Activated CD8-positive, alpha-beta memory T cell treated with anti-CD3 and anti-CD28 coated beads, Interleukin-2, amount 10 ng/mL, durations not matched to agents 7 days and 5 days (primary cell): ENCODE measurements at regions of chr3 and their contacts with region 1.

Region 1: DNA sequence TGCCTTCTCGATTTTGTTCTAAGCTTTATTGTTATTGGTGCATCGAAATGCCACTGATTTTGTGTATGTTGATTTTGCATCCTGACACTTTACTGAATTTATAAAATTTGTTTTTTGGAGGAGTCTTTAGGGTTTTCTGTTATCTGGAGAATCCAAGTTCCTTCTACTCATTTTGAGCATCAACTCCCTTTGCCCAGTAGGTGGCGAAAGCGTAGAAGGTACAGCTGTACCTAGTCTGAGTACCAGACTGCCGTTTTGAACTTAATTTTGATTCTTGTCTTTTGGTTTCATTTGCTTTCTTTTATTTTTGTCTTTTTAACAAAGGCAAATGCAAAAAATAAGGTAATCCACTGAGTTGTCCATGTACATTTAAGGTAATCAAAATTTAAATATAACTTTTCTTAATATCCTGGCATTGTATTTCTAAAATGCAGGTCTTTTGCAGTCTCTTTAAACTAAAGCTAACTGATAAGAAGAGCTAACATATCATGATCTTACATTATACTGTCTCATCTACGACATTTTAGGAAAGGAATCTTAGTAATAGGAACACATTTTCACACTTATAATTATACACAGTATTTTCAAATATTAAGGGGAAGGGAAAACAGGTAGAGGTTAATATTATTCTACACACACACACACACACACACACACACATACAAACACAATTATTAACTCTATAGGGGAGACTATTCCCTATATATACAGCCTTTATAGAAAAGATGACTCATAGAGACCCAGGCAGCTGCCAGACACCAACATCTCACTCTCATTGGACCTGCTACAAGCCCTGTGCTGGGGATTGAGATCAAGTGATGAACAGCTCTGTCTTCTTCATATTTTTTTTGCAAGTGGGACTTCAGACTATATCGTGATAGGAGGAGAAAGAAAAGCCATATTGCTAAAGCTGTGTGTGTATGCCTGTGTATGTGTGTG is 71.7 kb downstream of the SYNPR start:
- DNase-seq: peak; percentile 54
- ATAC-seq: no peak
- H3K4me3 Mint-ChIP-seq: no peak overlapping the region
- H3K27ac Mint-ChIP-seq: no peak overlapping the region
- H3K4me1 Mint-ChIP-seq: no peaks in the 10 kb centered on the region
- H3K27me3 Mint-ChIP-seq: peaks cover 14% of the 10 kb centered on the region

Region 2: DNA sequence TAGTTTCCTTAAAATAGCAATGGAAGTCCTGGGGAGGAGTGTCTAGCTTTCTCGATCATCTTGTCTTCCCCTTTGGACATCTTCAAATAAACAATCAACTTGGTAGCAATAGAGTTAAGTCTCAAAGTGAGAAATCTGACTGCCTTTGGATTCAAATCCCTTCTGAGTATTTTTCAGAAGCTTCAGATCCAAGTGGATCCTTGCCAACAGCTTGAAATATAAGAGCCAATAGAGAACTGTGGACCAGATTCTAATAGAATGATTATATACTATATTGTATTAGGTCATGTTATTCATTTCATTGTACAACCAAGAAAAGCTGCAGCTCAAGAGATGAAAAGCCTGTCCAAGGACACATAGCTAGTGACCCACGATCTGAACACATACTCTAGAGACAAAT is 11.5 kb before region 1 on chr3:
- CTCF ChIA-PET with region 1: no interaction called
- DNase-seq: no peak
- ATAC-seq: no peak
- H3K4me3 Mint-ChIP-seq: no peak overlapping the region
- H3K27ac Mint-ChIP-seq: no peak overlapping the region
- H3K4me1 Mint-ChIP-seq: no peaks in the 10 kb centered on the region
- H3K27me3 Mint-ChIP-seq: peaks cover 3% of the 10 kb centered on the region

Region 3: GRCh38 chr3:63370094-63370493 is 20.2 kb after region 1 on chr3:
- CTCF ChIA-PET with region 1: no interaction called
- DNase-seq: no peak
- ATAC-seq: no peak
- H3K4me3 Mint-ChIP-seq: no peak overlapping the region
- H3K27ac Mint-ChIP-seq: no peak overlapping the region
- H3K4me1 Mint-ChIP-seq: no peaks in the 10 kb centered on the region
- H3K27me3 Mint-ChIP-seq: peaks cover 4% of the 10 kb centered on the region

Region 4: DNA sequence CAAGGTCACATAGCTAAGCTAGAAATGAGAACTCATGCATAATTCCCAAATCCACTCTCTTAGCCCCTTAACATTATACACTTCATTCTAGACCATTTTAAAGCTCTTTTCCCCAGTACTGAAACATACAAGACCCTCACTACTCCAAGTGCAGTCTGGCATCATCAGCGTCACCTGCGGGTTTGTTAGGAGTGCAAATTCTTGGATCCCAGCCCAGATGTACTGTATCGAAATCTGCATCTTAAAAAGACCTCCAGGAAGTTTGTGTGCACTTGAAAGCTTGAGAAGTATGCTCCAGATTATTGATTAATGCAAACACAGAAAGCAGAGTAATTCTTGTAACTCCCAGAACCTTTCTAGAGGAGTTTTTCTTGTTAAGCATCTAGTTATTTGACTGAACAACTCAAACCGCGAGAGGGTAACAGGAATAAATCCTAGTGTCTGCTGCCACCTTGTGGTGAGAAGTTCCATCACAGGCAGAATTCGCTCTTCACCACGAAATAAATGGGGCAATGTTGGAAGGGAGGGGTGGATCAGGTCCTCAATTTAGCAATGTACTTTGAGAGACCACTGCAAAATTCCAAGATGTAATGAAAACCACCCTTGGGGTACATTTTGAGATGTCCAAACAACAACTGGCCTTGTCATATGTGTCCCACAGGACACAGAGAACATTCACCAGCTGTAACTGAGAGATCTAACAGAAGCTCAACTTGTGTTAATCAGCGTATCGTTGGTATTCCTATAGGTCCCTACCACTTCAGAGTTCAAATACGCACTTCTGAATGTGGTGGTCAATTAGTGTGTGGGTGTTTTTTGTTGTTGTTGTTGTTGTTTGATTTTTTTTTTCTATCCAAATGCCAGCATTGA is 468.7 kb after region 1 on chr3:
- CTCF ChIA-PET with region 1: interaction called, 36 read pairs
- DNase-seq: peak; percentile 70
- ATAC-seq: peak; percentile 60
- H3K4me3 Mint-ChIP-seq: no peak overlapping the region
- H3K27ac Mint-ChIP-seq: no peak overlapping the region
- H3K4me1 Mint-ChIP-seq: no peaks in the 10 kb centered on the region
- H3K27me3 Mint-ChIP-seq: no peaks in the 10 kb centered on the region